Head of caudate nucleus (tissue), 42 donors: ENCODE measurements at regions of chr4 and their contacts with region 1.

Region 1: GRCh38 chr4:173415885-173416653 is 17.2 kb upstream of the SCRG1 start:
- DNase-seq: peak in 36 of 42 donors; percentile 5 to 71 (median 37)

Region 2: GRCh38 chr4:173318648-173319211 is 97.3 kb before region 1 on chr4:
- intact Hi-C with region 1: loop called (anchors 5 kb)
- DNase-seq: peak in 3 of 42 donors; percentile 20 to 30 (median 29)

Region 3: GRCh38 chr4:173370477-173371291 is 45.4 kb before region 1 on chr4 and contains the start of gene SAP30:
- intact Hi-C with region 1: loop called (anchors 5 kb)
- DNase-seq: peak; percentile 93 to 99 (median 97)

Region 4: GRCh38 chr4:173494013-173494970 is 78.2 kb after region 1 on chr4:
- intact Hi-C with region 1: loop called (anchors 5 kb)
- DNase-seq: peak; percentile 17 to 86 (median 59)

Region 5: DNA sequence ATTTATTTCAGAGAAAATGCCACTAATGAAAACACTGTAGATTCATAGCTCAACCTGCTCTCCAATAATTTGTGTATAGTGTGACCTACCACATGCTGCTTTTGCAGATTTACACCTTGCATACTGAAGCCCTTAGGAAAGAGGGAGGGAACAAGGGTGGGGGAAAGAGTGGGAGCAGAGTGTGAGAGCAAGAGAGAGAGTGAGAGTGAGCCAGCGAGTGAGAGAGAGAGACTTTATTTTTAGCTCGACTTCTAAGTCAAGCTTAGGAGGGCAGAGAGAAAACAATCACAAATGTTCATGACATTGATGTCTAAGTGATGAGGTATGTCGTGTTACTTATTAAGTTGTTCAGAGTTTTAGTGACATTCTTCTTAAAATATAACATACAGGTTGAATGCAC is 226.4 kb after region 1 on chr4:
- intact Hi-C with region 1: no loop called
- DNase-seq: peak in 3 of 42 donors; percentile 2 to 50 (median 10)